ENCODE measurements at regions of chr1 and their contacts with region 1.

Region 1: DNA sequence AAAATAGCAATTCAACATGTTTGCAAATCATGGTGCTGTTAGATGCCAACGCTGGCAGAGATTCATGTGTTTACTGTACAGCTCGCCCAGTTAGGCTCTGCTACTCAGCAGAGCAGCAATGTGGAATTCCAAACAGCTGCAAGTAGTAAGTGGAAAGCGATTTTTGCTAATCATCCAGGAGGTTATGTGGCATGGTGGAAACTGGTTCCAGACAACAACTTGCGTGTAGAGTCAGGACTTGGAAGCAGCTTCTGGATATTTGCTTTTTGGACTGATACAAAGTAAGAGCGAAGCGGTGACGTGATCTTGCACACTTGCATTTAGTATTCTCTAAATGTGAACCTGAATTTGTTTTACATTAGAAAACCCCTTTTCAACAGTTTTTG is 27.1 kb upstream of the HHAT start:
- DNase-seq: no peak
- H3K4me3 ChIP-seq: no peak overlapping the region
- H3K27ac ChIP-seq: no peak overlapping the region
- H3K4me1 ChIP-seq: peaks cover 11% of the 10 kb centered on the region
- H3K27me3 ChIP-seq: no peaks in the 10 kb centered on the region
- CTCF ChIP-seq: no peak

Region 2: GRCh38 chr1:210360852-210361477 is 59.4 kb after region 1 on chr1:
- CTCF ChIA-PET with region 1: interaction called, 41 read pairs
- dilution Hi-C with region 1: no loop called
- in situ Hi-C with region 1: no loop called
- intact Hi-C with region 1: no loop called
- DNase-seq: peak; percentile 43
- H3K4me3 ChIP-seq: no peak overlapping the region
- H3K27ac ChIP-seq: no peak overlapping the region
- H3K4me1 ChIP-seq: peaks cover 24% of the 10 kb centered on the region
- H3K27me3 ChIP-seq: no peaks in the 10 kb centered on the region
- CTCF ChIP-seq: peak; percentile 76 to 82

Measured in mammary epithelial cell (primary cell).